PC-9 (cell line): ENCODE measurements at regions of chr2 and their contacts with region 1.

Region 1: DNA sequence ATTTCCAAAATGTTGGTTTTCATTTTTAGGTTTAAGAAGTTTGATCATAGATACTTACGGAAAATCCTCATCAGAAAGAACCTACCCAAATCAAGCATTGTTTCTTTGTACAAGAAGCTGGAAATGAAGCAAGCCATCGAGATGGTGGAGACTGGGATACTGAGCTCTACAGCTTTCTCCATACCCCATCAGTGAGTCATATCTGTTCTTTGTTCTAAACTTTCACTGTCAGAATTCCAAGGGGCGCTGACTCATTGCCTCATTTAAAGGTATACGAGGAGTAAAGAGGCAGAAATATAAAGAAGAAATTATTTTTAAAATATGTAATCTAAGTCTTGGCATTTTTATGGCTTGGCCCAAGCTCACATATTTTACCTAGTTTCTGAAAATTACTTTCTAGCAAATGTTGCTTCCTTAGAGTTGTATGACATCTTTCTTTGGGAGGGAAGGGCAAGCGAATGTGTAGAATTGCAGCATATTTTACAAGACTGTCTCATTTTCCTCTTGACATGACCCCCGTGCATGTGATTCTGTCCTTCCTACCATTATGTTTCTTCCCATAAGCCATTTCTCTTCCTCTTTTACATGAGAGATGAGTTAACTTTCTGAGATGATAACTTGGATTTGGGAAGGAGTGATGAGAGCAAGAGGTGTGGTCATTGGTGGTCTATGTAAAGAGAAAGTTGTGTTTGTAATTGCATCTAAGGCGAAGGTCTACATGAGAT is 41.2 kb downstream of the SLC9A4 start:
- DNase-seq: peak; percentile 63 to 93
- H3K4me3 ChIP-seq: 0 out of 2 replicates have a peak overlapping the region, but pooled peaks have one; percentile 30
- H3K27ac ChIP-seq: peak overlapping the region; percentile 76
- H3K4me1 ChIP-seq: peaks cover 33% of the 10 kb centered on the region
- H3K27me3 ChIP-seq: no peaks in the 10 kb centered on the region
- CTCF ChIP-seq: no peak

Region 2: DNA sequence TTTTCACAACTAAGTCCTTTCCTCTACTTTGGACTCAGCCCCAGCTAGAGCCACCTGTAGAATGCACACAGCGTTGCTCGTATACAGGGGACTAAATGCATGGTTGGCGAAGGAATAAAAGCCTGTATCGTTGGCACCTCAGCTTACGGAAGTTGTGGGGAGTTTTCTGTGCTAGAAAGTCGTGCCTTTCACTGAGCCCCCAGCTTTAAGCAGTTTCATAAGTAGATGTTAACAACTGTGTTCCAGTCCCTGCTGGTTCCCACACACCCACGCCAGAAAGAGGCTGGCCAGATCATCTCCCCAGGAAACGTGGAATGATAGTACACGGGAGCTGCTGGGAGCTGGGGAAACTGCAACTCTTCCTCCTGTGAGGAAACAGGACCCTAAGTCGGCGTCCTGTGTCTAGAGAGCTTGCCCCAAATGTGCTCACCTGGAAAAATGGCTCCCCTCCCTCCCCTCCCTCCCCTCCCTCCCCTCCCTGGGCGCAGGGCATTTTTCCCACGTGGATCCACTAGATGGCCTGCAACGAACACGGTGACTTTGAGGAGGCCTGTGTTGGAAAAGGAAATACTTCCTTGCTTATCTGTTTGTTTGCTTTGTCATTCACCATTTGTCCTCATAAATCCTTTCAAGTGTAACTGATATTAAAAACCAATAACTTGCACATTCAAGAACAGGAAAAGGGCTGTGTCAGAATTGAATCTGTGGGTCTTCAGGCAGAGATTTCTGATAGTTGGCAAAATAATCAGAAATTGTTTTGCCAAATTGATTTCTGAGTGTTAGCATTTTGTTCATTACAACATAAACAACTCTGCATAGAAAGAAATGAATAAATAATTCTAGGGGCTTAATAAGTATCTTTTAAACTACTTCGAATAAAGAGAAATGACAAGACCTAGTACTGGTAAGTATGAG is 995.4 kb before region 1 on chr2:
- CTCF ChIA-PET with region 1: no interaction called
- POLR2A ChIA-PET with region 1: no interaction called
- intact Hi-C with region 1: no loop called
- DNase-seq: peak; percentile 52 to 95
- H3K4me3 ChIP-seq: peak overlapping the region; percentile 14; the same call in 1 of the 2 replicates
- H3K27ac ChIP-seq: peak overlapping the region; percentile 98
- H3K4me1 ChIP-seq: peaks cover 55% of the 10 kb centered on the region
- H3K27me3 ChIP-seq: no peaks in the 10 kb centered on the region
- CTCF ChIP-seq: peak; percentile 55; the same call in 1 of the 2 replicates

Region 3: DNA sequence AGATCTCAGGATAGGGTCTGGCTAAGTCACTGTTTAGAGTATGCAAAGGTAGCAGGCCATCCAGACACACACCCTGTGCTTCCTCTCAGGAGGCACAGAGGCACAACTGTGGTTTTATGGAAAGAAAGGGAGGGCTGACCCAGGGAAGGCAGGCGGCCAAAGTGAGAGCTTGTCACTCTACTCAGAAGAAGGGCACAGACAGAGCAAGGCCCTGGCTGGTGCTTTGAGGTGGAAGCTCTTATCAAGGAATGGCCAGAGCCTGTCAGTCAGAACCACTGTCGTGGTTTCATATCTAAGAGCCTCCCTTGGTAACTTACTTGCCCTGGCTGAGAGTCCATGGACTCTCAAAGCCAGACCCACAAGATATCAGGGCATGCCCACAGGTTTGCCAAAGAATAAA is 145.8 kb after region 1 on chr2:
- CTCF ChIA-PET with region 1: no interaction called
- POLR2A ChIA-PET with region 1: no interaction called
- intact Hi-C with region 1: loop called (anchors 2 kb)
- DNase-seq: peak in 1 of 2 experiments; percentile 37
- H3K4me3 ChIP-seq: no peak overlapping the region
- H3K27ac ChIP-seq: no peak overlapping the region
- H3K4me1 ChIP-seq: peaks cover 13% of the 10 kb centered on the region
- H3K27me3 ChIP-seq: no peaks in the 10 kb centered on the region
- CTCF ChIP-seq: no peak

Region 4: GRCh38 chr2:102726128-102727087 is 212.2 kb after region 1 on chr2:
- CTCF ChIA-PET with region 1: no interaction called
- POLR2A ChIA-PET with region 1: no interaction called
- intact Hi-C with region 1: no loop called
- DNase-seq: no peak
- H3K4me3 ChIP-seq: no peak overlapping the region
- H3K27ac ChIP-seq: no peak overlapping the region
- H3K4me1 ChIP-seq: no peaks in the 10 kb centered on the region
- H3K27me3 ChIP-seq: no peaks in the 10 kb centered on the region
- CTCF ChIP-seq: no peak